Activated B cell treated with CpG ODN at 0.5 μM for 24 hours (primary cell): ENCODE measurements at regions of chr14 and their contacts with region 1.

Region 1: DNA sequence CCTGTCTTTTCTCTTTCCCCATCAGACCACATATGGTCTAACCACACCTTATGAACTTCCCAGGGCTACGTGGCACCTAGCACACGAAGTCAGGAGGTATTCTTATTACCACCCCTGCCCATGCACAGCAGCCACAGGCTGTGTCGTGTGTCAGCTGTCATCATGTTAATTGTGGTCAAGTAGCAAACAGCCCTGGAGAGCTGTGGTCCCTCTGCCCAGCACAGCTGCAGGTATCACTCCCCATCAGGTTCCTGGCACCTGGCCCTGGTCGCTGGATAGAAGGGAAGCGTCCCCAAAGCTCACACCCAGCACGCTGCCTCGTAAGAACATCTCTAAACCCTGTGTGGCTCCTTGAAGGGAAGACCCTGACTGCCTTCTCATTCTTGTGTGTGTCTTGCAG is 45.4 kb downstream of the CLMN start:
- DNase-seq: no peak
- ATAC-seq: no peak
- H3K4me3 Mint-ChIP-seq: no peak overlapping the region
- H3K27ac Mint-ChIP-seq: no peak overlapping the region
- H3K4me1 Mint-ChIP-seq: peaks cover 15% of the 10 kb centered on the region
- H3K27me3 Mint-ChIP-seq: no peaks in the 10 kb centered on the region
- CTCF ChIP-seq: no peak

Region 2: DNA sequence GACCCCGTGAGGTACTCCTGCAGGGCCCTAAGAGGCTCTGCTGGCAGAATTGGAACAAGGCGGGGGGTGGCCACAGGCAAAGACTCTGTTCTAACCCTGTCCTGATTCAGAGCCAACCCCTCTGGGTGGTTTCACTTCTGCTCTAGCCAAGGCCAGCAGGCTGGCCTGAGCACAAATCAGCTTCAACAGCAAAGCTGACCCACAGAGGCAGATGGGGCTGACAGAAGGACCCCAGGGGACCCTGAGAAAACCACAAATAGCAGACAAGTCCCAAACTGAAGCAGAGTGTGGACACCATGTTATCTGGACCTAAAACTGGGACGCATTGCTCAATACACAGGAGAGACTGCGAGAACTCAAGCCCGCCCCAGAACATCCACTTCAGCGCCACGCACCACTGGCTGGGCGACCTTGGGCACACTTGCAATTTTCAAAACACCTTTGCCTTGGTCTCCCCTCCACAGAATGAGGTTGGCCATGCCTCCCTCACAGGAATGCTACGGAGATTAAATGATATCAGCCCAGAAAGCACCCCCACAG is 40.5 kb before region 1 on chr14:
- CTCF ChIA-PET with region 1: no interaction called
- POLR2A ChIA-PET with region 1: no interaction called
- intact Hi-C with region 1: no loop called
- DNase-seq: peak; percentile 24
- ATAC-seq: peak; percentile 91
- H3K4me3 Mint-ChIP-seq: peak overlapping the region; percentile 19
- H3K27ac Mint-ChIP-seq: peak overlapping the region; percentile 50
- H3K4me1 Mint-ChIP-seq: peaks cover 21% of the 10 kb centered on the region
- H3K27me3 Mint-ChIP-seq: no peaks in the 10 kb centered on the region
- CTCF ChIP-seq: no peak

Region 3: DNA sequence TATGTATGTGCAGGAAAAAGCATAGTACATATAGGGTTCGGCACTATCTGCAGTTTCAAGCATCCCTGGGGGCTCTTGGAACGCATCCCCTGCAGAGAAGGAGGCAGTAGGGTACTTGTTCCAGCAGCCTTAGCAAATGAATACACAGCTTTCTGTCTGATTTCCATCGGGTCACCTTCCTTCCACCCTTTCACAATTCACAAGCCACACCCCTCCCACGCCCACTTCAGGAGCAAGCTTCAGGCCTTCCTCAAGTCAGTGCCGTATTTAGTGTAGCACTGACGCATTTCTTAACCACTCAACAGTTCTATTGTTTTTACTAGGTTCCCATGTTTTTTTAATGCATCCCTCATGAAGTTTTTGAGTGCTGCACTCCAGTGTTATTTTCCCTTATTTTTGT is 18.8 kb before region 1 on chr14:
- CTCF ChIA-PET with region 1: no interaction called
- POLR2A ChIA-PET with region 1: no interaction called
- intact Hi-C with region 1: no loop called
- DNase-seq: no peak
- ATAC-seq: no peak
- H3K4me3 Mint-ChIP-seq: no peak overlapping the region
- H3K27ac Mint-ChIP-seq: no peak overlapping the region
- H3K4me1 Mint-ChIP-seq: peaks cover 14% of the 10 kb centered on the region
- H3K27me3 Mint-ChIP-seq: no peaks in the 10 kb centered on the region
- CTCF ChIP-seq: no peak

Region 4: DNA sequence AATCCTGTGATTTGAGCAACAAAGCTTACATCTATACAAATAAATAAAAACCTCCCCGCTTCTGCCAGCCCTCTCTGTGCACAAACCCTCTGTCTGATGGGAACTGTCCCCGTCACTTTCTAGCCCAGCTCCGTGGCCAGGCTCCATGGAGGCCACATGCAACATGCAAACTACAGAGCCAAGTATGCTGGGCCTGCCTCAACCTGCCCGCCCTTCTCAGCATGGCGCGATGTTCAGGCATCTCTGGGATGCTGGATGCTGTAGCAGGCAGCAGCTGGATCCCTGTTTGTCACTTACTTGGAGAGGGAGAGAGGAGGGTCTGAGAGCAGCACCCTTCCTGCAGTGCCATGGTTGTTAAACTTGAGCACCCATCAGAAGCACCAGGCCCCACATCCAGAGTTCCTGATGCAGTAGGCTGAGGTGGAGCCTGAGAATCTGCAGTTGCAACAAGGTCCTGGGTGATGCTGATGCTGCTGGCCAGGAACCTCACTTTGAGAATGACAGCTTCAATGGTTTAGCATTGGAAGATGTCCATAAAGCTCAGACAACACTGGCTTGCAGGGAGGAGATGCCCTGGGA is 13.0 kb after region 1 on chr14:
- CTCF ChIA-PET with region 1: no interaction called
- POLR2A ChIA-PET with region 1: interaction called, 12 read pairs
- intact Hi-C with region 1: no loop called
- DNase-seq: no peak
- ATAC-seq: no peak
- H3K4me3 Mint-ChIP-seq: no peak overlapping the region
- H3K27ac Mint-ChIP-seq: no peak overlapping the region
- H3K4me1 Mint-ChIP-seq: peaks cover 42% of the 10 kb centered on the region
- H3K27me3 Mint-ChIP-seq: no peaks in the 10 kb centered on the region
- CTCF ChIP-seq: no peak